B cell (primary cell): ENCODE measurements at regions of chr3 and their contacts with region 1.

Region 1: DNA sequence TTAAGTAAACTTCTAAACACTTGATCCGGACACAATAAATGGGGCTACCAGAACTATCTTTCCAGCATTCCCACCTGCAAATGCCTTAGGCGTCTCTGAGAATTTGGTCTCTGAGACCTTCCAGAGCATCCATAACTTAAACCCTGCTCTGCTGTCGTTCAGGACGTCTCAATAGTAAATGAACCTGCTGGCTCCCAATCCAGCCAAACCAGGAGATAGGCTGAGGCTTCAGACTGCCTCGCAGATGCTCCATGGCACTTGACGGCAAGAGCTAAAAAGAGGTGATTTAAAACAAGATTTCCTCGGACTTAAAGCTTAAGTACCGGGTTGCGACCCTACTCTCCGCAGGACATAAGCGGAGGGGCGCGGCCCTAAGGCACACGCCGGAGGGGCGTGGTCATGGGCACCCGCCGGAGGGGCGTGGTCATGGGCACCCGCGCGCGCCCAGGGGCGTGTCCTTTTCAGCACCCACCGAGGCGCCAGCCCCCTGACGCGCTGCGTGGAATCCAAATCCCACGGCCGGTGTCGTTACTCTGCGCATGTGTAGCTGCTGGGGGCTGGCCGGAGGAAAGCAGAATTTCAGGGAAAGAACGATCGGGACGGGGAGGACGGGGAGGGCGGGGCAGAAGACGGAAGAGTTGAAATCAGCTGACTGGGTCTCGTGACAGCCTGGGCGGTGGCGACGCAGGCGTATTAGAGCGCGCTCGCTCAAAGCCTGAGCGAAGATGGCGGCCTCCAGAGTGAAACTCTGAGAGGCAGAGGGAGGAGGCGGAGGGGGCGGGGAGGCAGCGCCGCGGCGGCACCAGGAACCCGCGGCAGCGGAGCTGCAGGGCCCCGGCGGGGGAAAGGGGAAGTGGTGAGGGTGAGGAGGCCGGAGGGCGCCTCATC is at the start of gene DNAJC13:
- DNase-seq: peak; percentile 99
- ATAC-seq: peak; percentile 87
- H3K4me3 ChIP-seq: peak within 1 kb of the TSS; percentile 84 to 99 (median 93)
- H3K4me3 Mint-ChIP-seq: peak within 1 kb of the TSS; percentile 100
- H3K27ac ChIP-seq: peak within 1 kb of the TSS; percentile 87 to 90
- H3K27ac Mint-ChIP-seq: peak within 1 kb of the TSS; percentile 98
- H3K4me1 ChIP-seq: peaks cover 12 to 13% of the 10 kb centered on the region in 2 donors
- H3K4me1 Mint-ChIP-seq: peaks cover 34% of the 10 kb centered on the region
- H3K27me3 ChIP-seq: no peaks in the 10 kb centered on the region
- H3K27me3 Mint-ChIP-seq: no peaks in the 10 kb centered on the region
- CTCF ChIP-seq: no peak
- total RNA-seq, gene DNAJC13: 51.1 and 56.0 TPM in 2 replicates

Region 2: GRCh38 chr3:130892759-130893375 is 1524.2 kb before region 1 on chr3:
- CTCF ChIA-PET with region 1: no interaction called
- POLR2A ChIA-PET with region 1: no interaction called
- intact Hi-C with region 1: loop called (anchors 5 kb)
- DNase-seq: peak; percentile 85
- ATAC-seq: peak; percentile 44
- H3K4me3 ChIP-seq: peak overlapping the region; percentile 71 to 98 (median 93)
- H3K4me3 Mint-ChIP-seq: peak overlapping the region; percentile 98
- H3K27ac ChIP-seq: peak overlapping the region; percentile 89 to 96
- H3K27ac Mint-ChIP-seq: peak overlapping the region; percentile 99
- H3K4me1 ChIP-seq: peaks cover 11% of the 10 kb centered on the region in 2 donors
- H3K4me1 Mint-ChIP-seq: peaks cover 32% of the 10 kb centered on the region
- H3K27me3 ChIP-seq: no peaks in the 10 kb centered on the region
- H3K27me3 Mint-ChIP-seq: no peaks in the 10 kb centered on the region
- CTCF ChIP-seq: peak; percentile 91

Region 3: DNA sequence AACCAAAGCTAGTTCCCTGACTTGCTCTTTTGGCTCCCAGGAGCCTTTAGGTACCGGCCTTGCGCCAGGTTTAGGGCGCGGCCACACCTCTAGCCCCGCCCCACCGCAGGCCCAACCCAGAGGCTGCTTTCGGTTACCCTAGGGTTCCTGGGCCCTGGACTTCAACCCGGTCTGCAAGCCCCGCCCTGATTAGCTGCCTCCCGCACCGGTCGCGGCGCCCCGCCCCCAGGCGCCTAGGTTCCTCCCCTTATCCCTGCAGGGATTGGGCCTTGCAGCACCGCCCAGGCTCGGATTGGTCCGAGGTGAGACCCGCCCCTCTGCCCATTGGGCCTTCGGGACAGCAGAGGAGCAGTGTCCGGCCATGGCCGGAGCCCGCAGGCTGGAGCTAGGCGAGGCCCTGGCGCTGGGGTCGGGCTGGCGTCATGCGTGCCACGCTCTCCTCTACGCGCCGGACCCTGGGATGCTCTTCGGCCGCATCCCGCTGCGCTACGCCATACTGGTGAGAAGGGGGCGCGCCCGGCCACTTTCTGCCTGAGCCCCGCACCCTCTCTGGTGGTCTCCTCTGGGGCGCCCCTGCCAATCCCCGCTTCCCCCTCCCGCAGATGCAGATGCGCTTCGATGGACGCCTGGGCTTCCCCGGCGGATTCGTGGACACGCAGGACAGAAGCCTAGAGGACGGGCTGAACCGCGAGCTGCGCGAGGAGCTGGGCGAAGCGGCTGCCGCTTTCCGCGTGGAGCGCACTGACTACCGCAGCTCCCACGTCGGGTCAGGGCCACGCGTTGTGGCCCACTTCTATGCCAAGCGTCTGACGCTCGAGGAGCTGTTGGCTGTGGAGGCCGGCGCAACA is 1035.4 kb before region 1 on chr3 and contains the start of gene NUDT16:
- CTCF ChIA-PET with region 1: no interaction called
- POLR2A ChIA-PET with region 1: no interaction called
- intact Hi-C with region 1: loop called (anchors 2 kb)
- DNase-seq: peak; percentile 97
- ATAC-seq: peak; percentile 98
- H3K4me3 ChIP-seq: peak within 1 kb of the TSS; percentile 65 to 99 (median 92)
- H3K4me3 Mint-ChIP-seq: peak within 1 kb of the TSS; percentile 98
- H3K27ac ChIP-seq: peak within 1 kb of the TSS; percentile 57 to 59
- H3K27ac Mint-ChIP-seq: peak within 1 kb of the TSS; percentile 96
- H3K4me1 ChIP-seq: peaks cover 17 to 26% of the 10 kb centered on the region in 2 donors
- H3K4me1 Mint-ChIP-seq: peaks cover 26% of the 10 kb centered on the region
- H3K27me3 ChIP-seq: no peaks in the 10 kb centered on the region
- H3K27me3 Mint-ChIP-seq: no peaks in the 10 kb centered on the region
- CTCF ChIP-seq: peak; percentile 39
- total RNA-seq, gene NUDT16: 17.6 and 19.1 TPM in 2 replicates

Region 4: GRCh38 chr3:132593947-132594323 is 176.9 kb after region 1 on chr3:
- CTCF ChIA-PET with region 1: no interaction called
- POLR2A ChIA-PET with region 1: no interaction called
- intact Hi-C with region 1: no loop called
- DNase-seq: no peak
- ATAC-seq: no peak
- H3K4me3 ChIP-seq: no peak overlapping the region
- H3K4me3 Mint-ChIP-seq: no peak overlapping the region
- H3K27ac ChIP-seq: no peak overlapping the region
- H3K27ac Mint-ChIP-seq: no peak overlapping the region
- H3K4me1 ChIP-seq: no peaks in the 10 kb centered on the region
- H3K4me1 Mint-ChIP-seq: no peaks in the 10 kb centered on the region
- H3K27me3 ChIP-seq: no peaks in the 10 kb centered on the region
- H3K27me3 Mint-ChIP-seq: no peaks in the 10 kb centered on the region
- CTCF ChIP-seq: no peak

Region 5: DNA sequence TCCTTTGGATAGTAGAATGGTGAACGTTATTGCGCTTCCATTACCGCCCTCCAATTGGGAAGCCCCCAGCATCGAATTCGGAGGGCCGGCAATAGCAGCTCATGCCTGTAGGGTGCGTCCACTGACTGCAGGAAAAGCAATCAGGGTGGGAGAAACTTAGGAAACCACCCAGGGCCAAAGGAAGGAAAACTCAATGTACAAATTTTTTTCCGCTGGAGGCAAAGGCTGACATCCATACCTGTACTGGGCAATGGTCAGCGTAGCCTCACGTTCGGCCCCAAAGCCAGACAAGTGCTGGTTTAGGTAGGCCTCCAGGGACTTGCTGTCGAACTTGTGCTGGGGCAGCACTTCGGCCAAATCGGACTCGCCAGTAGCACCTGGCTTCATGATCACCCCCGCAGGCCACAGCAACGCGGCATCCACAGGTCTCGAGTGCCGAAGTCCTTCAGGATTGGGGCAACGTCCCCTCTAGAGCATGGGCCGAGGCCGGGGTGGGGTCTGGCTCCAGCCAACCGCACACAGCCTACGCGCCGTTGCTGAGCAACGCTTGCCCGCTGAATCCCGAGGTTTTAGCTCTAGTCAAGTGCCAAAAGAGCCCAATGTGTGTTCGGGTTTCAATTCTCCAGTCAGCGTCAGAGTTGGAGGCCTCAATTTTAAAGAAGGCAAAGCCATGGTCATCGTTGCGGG is 242.5 kb after region 1 on chr3 and contains the start of gene ACAD11:
- CTCF ChIA-PET with region 1: no interaction called
- POLR2A ChIA-PET with region 1: no interaction called
- intact Hi-C with region 1: loop called (anchors 5 kb)
- DNase-seq: peak; percentile 78
- ATAC-seq: peak; percentile 71
- H3K4me3 ChIP-seq: peak within 1 kb of the TSS; percentile 67 to 97 (median 77)
- H3K4me3 Mint-ChIP-seq: peak within 1 kb of the TSS; percentile 97
- H3K27ac ChIP-seq: peak within 1 kb of the TSS; percentile 69 to 80
- H3K27ac Mint-ChIP-seq: peak within 1 kb of the TSS; percentile 95
- H3K4me1 ChIP-seq: peaks cover 15 to 21% of the 10 kb centered on the region in 2 donors
- H3K4me1 Mint-ChIP-seq: peaks cover 31% of the 10 kb centered on the region
- H3K27me3 ChIP-seq: no peaks in the 10 kb centered on the region
- H3K27me3 Mint-ChIP-seq: no peaks in the 10 kb centered on the region
- CTCF ChIP-seq: peak; percentile 62
- total RNA-seq, gene ACAD11: 26.9 and 30.2 TPM in 2 replicates

Region 6: GRCh38 chr3:133805527-133806475 is 1388.8 kb after region 1 on chr3 and contains the start of gene SRPRB:
- CTCF ChIA-PET with region 1: no interaction called
- POLR2A ChIA-PET with region 1: no interaction called
- intact Hi-C with region 1: loop called (anchors 1 kb)
- DNase-seq: peak; percentile 95
- ATAC-seq: peak; percentile 98
- H3K4me3 ChIP-seq: peak within 1 kb of the TSS; percentile 56 to 95 (median 87)
- H3K4me3 Mint-ChIP-seq: peak within 1 kb of the TSS; percentile 99
- H3K27ac ChIP-seq: peak within 1 kb of the TSS; percentile 75 to 80
- H3K27ac Mint-ChIP-seq: peak within 1 kb of the TSS; percentile 94
- H3K4me1 ChIP-seq: peaks cover 11 to 13% of the 10 kb centered on the region in 2 donors
- H3K4me1 Mint-ChIP-seq: peaks cover 18% of the 10 kb centered on the region
- H3K27me3 ChIP-seq: no peaks in the 10 kb centered on the region
- H3K27me3 Mint-ChIP-seq: no peaks in the 10 kb centered on the region
- CTCF ChIP-seq: no peak
- total RNA-seq, gene SRPRB: 28.8 and 29.7 TPM in 2 replicates